ENCODE measurements at regions of chr12 and their contacts with region 1.

Region 1: DNA sequence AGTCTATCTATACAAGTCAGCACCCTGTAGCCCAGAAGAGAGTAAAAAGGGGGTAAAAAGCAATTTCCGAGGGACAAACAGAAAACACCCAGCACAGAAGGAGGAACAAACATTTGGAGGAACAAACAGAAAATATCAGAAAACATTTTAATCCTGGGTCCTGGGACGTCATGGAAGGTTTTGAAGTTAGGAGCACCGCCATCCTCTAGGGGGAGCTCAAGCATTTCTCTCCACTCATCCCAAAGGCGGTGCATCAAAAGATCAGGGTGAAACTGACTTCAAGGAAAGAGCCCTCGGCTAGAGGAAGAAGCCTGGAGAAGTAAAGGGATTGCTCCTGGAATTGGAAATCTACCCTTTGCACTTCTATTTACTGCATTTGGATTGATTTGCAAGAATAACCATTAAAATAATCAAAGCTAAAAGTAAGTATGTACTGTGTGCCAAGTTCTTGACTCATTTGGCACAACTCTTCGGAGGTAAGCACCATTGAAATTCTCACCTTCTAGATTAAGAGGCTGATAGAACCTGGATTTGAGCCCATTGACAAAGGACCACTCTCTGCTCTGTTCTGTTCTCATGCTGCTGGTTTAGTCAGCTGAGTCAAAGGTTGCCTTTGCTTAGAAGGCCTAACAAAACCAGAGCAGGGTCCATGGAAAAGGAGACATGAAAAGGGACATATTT is 17.2 kb upstream of the POC1B start:
- DNase-seq: peak; percentile 32
- ATAC-seq: peak; percentile 72

Region 2: GRCh38 chr12:89421092-89421835 is 121.8 kb before region 1 on chr12:
- intact Hi-C with region 1: no loop called
- DNase-seq: no peak
- ATAC-seq: no peak

Region 3: GRCh38 chr12:89597770-89598169 is 54.7 kb after region 1 on chr12:
- intact Hi-C with region 1: no loop called
- DNase-seq: no peak
- ATAC-seq: no peak

Region 4: DNA sequence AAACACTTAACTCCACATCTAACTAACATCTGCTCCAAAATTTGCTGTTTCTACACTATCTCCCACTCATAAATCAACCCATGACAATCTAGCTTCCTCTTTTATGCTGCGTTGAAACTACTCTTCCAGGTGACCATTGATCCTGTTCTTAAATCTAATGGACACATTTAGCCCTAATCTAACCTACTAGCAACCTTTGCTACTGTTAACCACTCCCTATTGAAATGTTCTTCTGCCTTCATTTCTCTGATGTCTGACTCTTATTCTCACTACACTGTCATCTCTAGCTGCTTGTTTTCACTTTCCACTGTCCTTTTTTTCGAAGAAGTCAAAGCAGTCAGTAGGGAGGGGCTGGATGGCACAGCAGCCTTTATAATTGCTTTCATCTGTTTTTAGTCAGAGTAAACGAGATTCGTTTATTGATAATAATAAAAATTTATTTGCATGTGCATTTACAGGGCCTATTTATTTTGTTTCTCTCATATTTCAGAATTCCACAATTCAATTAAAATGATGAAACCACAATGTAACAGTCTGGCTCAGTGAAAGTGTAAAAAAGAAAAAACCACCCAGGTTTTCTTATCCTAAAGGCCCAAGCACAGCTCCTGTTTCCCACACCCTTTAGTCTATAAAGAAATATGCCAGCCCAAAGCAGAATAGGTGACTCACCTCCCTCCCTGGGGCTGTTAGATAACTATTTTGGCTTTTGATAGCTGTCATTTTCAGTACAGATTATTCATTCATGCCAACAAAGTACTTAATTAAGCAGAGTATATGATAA is 120.7 kb after region 1 on chr12:
- intact Hi-C with region 1: no loop called
- DNase-seq: no peak
- ATAC-seq: no peak

Region 5: GRCh38 chr12:89709157-89709994 is 166.3 kb after region 1 on chr12:
- intact Hi-C with region 1: loop called (anchors 10 kb)
- DNase-seq: peak; percentile 98
- ATAC-seq: peak; percentile 93

Region 6: DNA sequence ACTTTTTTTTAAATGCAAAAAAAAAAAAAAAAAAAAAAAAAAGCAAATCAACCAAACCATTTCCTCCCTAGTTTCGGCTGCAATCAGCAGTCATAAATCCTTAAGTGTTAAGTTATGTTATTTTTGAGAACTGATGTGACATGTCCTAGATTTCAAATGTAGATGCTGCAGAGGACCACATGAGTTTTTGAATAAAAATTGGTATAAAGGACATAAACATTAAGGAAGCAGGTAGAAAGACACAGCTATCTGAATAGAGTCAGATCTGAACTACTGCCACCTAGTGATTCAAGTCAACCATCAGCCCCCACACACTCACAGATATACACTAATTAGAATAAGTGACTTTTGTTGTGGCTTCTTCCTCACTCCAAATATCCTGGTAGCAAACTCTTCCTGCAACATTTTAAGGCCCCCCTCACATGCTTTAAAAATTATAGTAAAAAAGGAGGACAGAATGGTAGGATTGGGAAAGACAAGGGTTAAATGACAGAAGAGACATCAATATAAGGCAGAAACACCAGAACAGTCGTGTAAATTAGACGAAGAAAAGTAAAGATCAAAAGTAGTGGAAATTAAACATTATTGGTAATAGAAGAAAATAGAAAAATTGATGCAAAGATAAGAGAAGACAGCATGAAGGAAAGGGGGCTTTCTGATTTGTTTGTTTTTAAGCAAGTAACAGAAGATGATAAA is 560.1 kb after region 1 on chr12:
- intact Hi-C with region 1: loop called (anchors 5 kb)
- DNase-seq: no peak
- ATAC-seq: peak; percentile 38